GM18951 (cell line): ENCODE measurements at regions of chr17 and their contacts with region 1.

Region 1: DNA sequence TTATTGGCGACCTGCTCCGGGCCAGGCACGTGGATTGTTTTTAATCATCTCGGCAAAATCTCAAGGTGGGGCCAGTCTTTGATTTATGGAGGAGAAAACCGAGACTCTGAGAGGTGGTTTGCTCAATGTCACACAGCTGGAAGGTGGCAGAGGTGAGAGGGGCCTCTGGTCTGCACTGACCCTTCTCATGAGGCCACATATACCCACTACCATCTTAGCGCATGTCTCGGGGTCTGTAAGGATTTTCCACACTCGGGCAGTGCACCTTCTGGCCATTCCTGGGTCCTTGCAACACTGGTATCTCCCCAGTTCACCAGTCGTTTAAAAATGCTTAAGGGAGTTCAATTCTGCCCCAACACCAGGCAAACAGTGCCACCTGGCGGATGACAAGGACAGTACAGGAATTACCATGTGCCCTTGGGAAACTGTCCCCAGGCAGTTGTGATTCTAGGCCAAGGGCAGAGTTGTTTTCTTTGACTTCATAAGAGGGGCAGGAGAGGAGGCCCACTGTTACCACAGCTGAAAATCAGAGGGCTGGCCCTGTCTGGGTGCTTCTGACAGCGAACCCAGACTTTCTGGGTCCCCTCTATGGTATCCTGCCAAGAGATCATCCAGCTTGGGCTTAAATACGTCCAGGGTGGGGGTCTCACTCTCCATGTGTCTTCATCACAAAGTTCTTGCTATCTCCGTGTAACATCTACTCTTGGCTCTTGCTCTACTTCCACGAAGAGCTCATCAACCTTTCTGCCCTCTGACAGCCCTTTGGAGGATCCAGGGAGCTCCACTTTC is 39.4 kb upstream of the RAI1 start:
- POLR2A ChIP-seq: no peak

Region 2: GRCh38 chr17:16938496-16939207 is 703.2 kb before region 1 on chr17:
- in situ Hi-C with region 1: no loop called
- POLR2A ChIP-seq: no peak

Region 3: DNA sequence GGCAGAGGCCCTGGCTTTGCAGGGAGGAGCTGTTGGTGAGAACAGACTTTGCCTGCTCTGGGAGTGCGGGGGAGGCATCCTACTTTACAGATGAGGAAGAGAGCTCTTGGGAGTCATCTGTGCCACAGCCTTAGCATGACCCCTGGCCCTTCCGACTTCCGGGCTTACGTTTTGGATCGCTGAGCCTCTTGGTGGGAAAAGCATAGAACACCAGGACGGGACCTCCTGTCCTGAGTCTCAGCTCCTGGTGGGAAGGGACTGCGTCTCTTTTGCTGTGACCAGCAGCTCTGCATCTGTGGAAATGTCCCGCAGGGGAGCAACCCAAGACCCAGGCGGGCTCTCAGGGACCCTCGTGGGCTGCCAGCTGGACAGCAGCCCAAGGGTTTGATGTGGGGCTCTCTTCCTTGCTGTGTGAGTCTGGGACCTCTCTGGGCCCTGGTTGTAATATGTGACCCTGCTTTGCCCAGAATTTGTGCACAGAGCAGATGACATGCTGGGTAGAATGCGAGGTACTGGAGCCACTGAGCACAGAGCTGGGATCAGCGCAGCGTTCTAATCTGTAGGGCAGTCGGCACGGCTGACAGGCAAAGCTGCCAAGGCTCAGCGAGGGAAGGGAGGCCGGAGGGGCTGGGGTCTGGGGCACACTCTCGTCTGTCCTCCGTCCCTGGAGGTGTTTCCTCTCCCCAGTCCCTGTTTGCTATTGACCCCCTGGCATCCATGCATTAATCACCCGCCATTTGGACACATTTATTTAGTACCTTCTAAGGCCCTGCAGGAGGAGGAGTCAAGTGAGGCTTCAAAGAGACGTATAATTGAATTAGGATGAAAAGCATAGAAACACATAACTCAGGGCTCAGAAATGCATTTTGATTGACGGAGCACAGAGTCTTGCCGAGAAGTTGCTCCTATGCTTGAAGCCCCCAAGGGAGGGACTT is 274.6 kb before region 1 on chr17:
- in situ Hi-C with region 1: loop called (anchors 5 kb)
- POLR2A ChIP-seq: no peak

Region 4: GRCh38 chr17:17496189-17497064 is 145.4 kb before region 1 on chr17 and contains the start of gene RASD1:
- in situ Hi-C with region 1: loop called (anchors 5 kb)
- POLR2A ChIP-seq: no peak

Region 5: GRCh38 chr17:17681187-17681848 is 39.5 kb after region 1 on chr17 and contains the start of gene RAI1:
- in situ Hi-C with region 1: no loop called
- POLR2A ChIP-seq: peak; percentile 57